A549 (cell line): ENCODE measurements at regions of chr14 and their contacts with region 1.

Region 1: GRCh38 chr14:30214461-30215090 is 286.9 kb upstream of the PRKD1 start:
- DNase-seq: peak; percentile 14 to 62
- ATAC-seq: peak; percentile 66 to 81
- H3K4me3 ChIP-seq: no peak overlapping the region
- H3K27ac ChIP-seq: no peak overlapping the region
- H3K4me1 ChIP-seq: no peaks in the 10 kb centered on the region
- CTCF ChIP-seq: peak; percentile 72
- EP300 ChIP-seq: no peak
- POLR2A ChIP-seq: no peak
- RAD21 ChIP-seq: peak; percentile 75 to 80

Region 2: GRCh38 chr14:28754209-28754985 is 1460.2 kb before region 1 on chr14:
- CTCF ChIA-PET with region 1: interaction called, 12 read pairs
- POLR2A ChIA-PET with region 1: no interaction called
- DNase-seq: peak; percentile 40 to 57
- ATAC-seq: peak; percentile 75 to 85; a peak in 4 of 6 replicates
- H3K4me3 ChIP-seq: no peak overlapping the region
- H3K27ac ChIP-seq: no peak overlapping the region
- H3K4me1 ChIP-seq: no peaks in the 10 kb centered on the region
- CTCF ChIP-seq: peak; percentile 81
- EP300 ChIP-seq: no peak
- POLR2A ChIP-seq: no peak
- RAD21 ChIP-seq: peak; percentile 79 to 84

Region 3: DNA sequence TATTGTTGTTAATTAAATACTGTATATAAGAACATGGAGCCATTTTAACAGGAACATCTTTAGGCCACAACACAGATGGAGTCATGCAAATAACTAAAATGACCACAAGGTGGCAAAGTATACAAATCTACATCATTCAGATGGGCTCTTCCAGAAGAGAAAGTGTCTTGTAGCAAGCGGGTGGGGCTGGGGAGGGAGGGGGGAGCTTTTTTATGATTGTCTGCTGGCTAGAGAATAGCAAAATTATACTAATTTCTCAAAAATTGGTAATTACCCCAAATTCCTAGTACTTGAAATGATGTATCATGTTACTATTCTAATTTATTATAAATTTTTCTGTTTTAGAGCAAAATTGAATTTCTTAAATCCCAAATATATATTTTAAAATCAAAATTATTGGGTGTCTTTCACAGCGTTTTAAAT is 665.6 kb before region 1 on chr14:
- CTCF ChIA-PET with region 1: interaction called, 41 read pairs
- POLR2A ChIA-PET with region 1: no interaction called
- DNase-seq: peak; percentile 38 to 68
- ATAC-seq: peak; percentile 88 to 89
- H3K4me3 ChIP-seq: no peak overlapping the region
- H3K27ac ChIP-seq: no peak overlapping the region
- H3K4me1 ChIP-seq: no peaks in the 10 kb centered on the region
- CTCF ChIP-seq: peak; percentile 67
- EP300 ChIP-seq: no peak
- POLR2A ChIP-seq: no peak
- RAD21 ChIP-seq: peak; percentile 65 to 75

Region 4: DNA sequence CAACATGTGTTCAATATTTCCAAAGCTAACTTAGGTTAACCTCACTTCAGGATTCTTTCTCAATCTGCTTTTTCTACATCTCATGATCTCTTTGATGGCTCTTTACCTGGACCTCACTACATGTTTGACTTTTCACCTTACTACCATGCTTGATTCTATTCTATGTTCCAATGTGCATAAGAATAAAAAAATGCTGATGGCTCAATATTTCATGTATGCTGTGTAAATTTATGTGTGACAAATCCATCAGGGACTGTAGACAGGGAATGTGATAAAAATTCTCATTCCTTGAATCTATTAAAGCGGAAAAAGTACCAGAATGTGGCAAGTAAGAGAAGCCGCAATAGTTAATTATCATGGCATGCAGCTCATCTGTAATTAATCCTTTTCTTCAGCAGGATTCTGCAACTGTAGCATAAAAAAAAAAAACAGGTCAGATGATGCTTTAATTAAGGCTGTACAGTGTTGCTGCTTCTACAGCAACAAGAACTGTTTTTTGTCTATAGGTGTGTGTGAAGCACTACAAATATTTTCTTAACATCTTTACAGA is 10.1 kb before region 1 on chr14:
- CTCF ChIA-PET with region 1: interaction called, 23 read pairs
- POLR2A ChIA-PET with region 1: no interaction called
- DNase-seq: no peak
- ATAC-seq: no peak
- H3K4me3 ChIP-seq: no peak overlapping the region
- H3K27ac ChIP-seq: no peak overlapping the region
- H3K4me1 ChIP-seq: no peaks in the 10 kb centered on the region
- CTCF ChIP-seq: no peak
- EP300 ChIP-seq: no peak
- POLR2A ChIP-seq: no peak
- RAD21 ChIP-seq: no peak

Region 5: DNA sequence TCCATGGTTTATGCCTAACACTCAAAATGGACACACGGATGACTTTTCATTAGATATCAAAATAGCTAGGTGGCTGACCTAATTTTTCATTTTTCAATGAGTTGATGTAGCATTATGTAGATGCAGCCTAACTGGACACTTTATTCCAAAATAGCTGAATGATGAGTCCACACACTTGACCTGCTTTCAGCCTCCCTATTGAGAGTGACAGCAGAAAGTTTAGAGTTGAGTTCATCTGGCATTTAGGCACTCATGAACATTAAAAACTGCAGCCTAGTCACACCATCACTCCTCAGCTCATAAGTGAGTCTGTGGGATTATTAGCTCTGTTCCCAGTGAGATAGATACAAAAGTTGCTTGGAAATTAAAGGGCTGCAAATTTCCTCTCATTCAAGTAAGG is 20.4 kb after region 1 on chr14:
- CTCF ChIA-PET with region 1: interaction called, 10 read pairs
- POLR2A ChIA-PET with region 1: no interaction called
- DNase-seq: no peak
- ATAC-seq: no peak
- H3K4me3 ChIP-seq: no peak overlapping the region
- H3K27ac ChIP-seq: no peak overlapping the region
- H3K4me1 ChIP-seq: no peaks in the 10 kb centered on the region
- CTCF ChIP-seq: no peak
- EP300 ChIP-seq: no peak
- POLR2A ChIP-seq: no peak
- RAD21 ChIP-seq: no peak

Region 6: DNA sequence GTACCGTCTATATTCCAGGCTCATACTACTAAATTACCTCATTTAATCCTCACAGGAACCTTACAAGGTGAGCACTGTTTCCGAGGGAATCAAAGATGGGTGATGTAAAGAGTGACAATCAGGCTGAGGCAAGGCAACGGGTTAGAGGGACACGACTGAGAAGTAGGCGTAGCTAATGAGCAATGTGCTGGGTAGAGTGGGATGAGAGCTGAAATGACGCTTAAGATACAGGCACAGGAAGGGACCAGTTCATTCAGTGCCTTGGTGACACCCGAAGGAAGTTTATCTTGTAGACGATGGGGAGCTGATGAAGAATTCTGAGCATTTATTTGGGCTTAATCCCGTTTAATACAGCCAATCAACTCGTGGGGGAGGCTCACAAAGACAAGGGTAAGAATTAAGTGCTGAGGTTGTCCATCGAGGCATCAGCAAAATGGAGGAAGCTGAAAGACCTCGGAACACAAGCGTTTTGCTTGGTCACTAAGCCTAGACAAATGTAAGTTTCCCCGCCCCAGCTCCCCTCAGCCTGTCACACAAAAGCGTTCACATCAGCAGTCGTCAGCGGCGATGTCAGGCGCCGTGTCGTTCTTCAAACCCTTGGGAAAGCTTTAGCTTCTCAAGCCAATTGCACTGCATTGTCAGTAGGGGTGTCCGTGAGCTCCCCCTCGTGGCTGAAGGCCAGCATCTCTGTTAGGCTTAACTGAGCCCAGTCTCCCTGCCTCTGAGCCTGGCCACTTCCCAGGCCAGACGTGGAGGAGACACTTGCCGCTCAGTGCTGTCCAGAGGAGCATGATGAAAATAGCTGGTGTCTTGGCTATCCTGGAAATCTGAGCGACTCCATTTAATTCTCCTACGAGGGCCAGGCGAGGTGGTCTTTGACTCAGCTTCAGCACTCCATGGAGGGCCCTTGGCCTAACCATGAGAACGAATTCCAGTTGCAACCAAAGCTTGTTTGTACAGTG is 55.9 kb after region 1 on chr14:
- CTCF ChIA-PET with region 1: interaction called, 11 read pairs
- POLR2A ChIA-PET with region 1: no interaction called
- DNase-seq: peak; percentile 41 to 78
- ATAC-seq: peak; percentile 99 to 100
- H3K4me3 ChIP-seq: peak overlapping the region; percentile 23; the same call in 1 of the 3 replicates
- H3K27ac ChIP-seq: no peak overlapping the region
- H3K4me1 ChIP-seq: no peaks in the 10 kb centered on the region
- CTCF ChIP-seq: peak; percentile 68
- EP300 ChIP-seq: no peak
- POLR2A ChIP-seq: no peak
- RAD21 ChIP-seq: peak; percentile 46 to 60; a peak in 4 of 5 replicates